ENCODE measurements at regions of chr14 and their contacts with region 1.

Region 1: GRCh38 chr14:51283402-51284085 is 43.5 kb downstream of the TMX1 start:
- DNase-seq: no peak
- H3K4me3 ChIP-seq: no peak overlapping the region
- H3K27ac ChIP-seq: peak overlapping the region in 1 of 4 donors; percentile 31
- H3K4me1 ChIP-seq: peaks cover 0 to 13% (median 3%) of the 10 kb centered on the region in 3 donors
- H3K27me3 ChIP-seq: no peaks in the 10 kb centered on the region
- CTCF ChIP-seq: peak; percentile 55 to 95 (median 74)
- POLR2A ChIP-seq: no peak

Region 2: GRCh38 chr14:51185754-51186153 is 97.8 kb before region 1 on chr14:
- intact Hi-C with region 1: no loop called
- DNase-seq: no peak
- H3K4me3 ChIP-seq: no peak overlapping the region
- H3K27ac ChIP-seq: no peak overlapping the region
- H3K4me1 ChIP-seq: no peaks in the 10 kb centered on the region
- H3K27me3 ChIP-seq: no peaks in the 10 kb centered on the region
- CTCF ChIP-seq: no peak
- POLR2A ChIP-seq: no peak

Region 3: DNA sequence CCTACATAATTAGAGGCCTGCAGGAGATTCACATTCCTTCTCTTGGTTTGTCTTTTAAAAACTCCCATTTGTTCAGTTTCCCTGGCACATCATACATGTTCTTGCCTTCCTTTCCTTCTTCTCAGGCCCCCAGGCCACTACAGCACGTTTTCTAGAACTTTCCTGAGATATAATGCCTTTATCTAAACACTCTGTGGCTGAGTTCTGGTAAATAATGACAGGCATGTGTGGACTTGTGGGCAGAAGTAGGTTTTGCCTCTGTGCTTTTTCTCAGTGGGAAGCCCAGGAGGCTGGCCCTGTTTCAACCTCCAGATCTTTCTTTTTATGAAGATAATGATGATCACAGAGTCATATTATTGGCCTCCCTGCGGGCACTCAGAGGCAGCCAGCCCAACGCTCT is 73.7 kb after region 1 on chr14:
- intact Hi-C with region 1: no loop called
- DNase-seq: no peak
- H3K4me3 ChIP-seq: no peak overlapping the region
- H3K27ac ChIP-seq: peak overlapping the region in 3 of 4 donors; percentile 39 to 73 (median 62)
- H3K4me1 ChIP-seq: peaks cover 7 to 50% (median 27%) of the 10 kb centered on the region in 3 donors
- H3K27me3 ChIP-seq: no peaks in the 10 kb centered on the region
- CTCF ChIP-seq: no peak
- POLR2A ChIP-seq: no peak

Region 4: DNA sequence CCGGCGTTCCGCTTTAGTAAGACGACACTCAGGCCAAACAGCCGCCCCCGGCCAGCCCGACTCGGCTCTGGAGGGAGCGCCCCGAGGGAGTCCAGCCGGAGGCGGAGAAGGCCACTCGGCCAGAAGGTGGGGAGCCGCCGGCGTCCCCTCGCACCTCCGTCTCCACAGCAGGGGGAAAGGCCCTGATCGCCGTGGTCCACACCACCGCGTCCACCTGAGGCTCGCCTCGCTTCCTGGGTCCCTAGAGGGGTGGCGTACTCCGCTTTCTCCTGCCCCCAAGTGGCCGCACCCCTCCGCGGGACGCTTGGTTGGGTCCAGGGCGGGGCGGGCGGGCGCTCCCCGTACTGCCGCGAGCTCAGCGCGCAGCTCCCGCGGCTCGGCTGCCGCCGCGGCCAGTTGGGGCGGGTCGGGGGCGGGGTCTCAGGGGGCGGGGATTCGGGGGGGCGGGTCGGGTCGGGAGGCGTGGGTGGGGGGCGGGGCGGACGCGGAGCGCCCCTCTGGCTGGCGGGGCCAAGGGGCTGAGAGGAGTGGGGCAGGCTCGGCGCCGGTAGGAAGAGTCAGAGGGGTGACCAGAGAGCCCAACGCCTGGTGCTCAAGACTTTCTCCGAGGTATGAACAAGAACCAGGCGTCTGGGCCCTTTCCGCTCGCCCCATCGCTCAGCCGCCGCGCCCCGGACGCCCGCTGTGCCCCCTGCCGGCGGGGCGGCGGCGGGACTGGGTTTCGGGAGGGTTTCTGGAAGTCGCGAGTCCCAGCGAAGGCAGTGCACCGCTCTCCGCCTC is 368.0 kb after region 1 on chr14 and contains the start of gene FRMD6:
- intact Hi-C with region 1: loop called (anchors 10 kb)
- DNase-seq: peak; percentile 28
- H3K4me3 ChIP-seq: peak within 1 kb of the TSS; percentile 69 to 88 (median 87)
- H3K27ac ChIP-seq: peak within 1 kb of the TSS; percentile 97 to 99 (median 98)
- H3K4me1 ChIP-seq: peaks cover 0 to 67% (median 7%) of the 10 kb centered on the region in 3 donors
- H3K27me3 ChIP-seq: no peaks in the 10 kb centered on the region
- CTCF ChIP-seq: peak in 5 of 6 experiments; percentile 72 to 90 (median 83)
- POLR2A ChIP-seq: peak in 2 of 4 donors; percentile 66 to 67
- total RNA-seq, gene FRMD6: 98.1 to 191 (median 110) TPM

Region 5: GRCh38 chr14:51776102-51776894 is 492.8 kb after region 1 on chr14:
- intact Hi-C with region 1: loop called (anchors 2 kb)
- DNase-seq: no peak
- H3K4me3 ChIP-seq: no peak overlapping the region
- H3K27ac ChIP-seq: no peak overlapping the region
- H3K4me1 ChIP-seq: peaks cover 0 to 13% (median 7%) of the 10 kb centered on the region in 3 donors
- H3K27me3 ChIP-seq: no peaks in the 10 kb centered on the region
- CTCF ChIP-seq: peak; percentile 40 to 74 (median 60)
- POLR2A ChIP-seq: no peak